Endothelial cell of umbilical vein (primary cell): ENCODE measurements at regions of chr14 and their contacts with region 1.

Region 1: GRCh38 chr14:20855652-20856291 is 35.4 kb upstream of the RNASE3 start:
- DNase-seq: peak; percentile 82
- H3K4me3 ChIP-seq: no peak overlapping the region
- H3K27ac ChIP-seq: no peak overlapping the region
- H3K4me1 ChIP-seq: no peaks in the 10 kb centered on the region
- H3K27me3 ChIP-seq: peaks cover 14 to 20% of the 10 kb centered on the region in 2 experiments
- CTCF ChIP-seq: peak; percentile 64 to 72
- POLR2A ChIP-seq: no peak

Region 2: GRCh38 chr14:20516906-20517305 is 338.9 kb before region 1 on chr14:
- CTCF ChIA-PET with region 1: no interaction called
- POLR2A ChIA-PET with region 1: no interaction called
- dilution Hi-C with region 1: no loop called
- intact Hi-C with region 1: no loop called
- DNase-seq: peak; percentile 82
- H3K4me3 ChIP-seq: peak overlapping the region in 1 of 3 experiments; percentile 2
- H3K27ac ChIP-seq: peak overlapping the region; percentile 81
- H3K4me1 ChIP-seq: peaks cover 31% of the 10 kb centered on the region
- H3K27me3 ChIP-seq: no peaks in the 10 kb centered on the region
- CTCF ChIP-seq: no peak
- POLR2A ChIP-seq: no peak

Region 3: DNA sequence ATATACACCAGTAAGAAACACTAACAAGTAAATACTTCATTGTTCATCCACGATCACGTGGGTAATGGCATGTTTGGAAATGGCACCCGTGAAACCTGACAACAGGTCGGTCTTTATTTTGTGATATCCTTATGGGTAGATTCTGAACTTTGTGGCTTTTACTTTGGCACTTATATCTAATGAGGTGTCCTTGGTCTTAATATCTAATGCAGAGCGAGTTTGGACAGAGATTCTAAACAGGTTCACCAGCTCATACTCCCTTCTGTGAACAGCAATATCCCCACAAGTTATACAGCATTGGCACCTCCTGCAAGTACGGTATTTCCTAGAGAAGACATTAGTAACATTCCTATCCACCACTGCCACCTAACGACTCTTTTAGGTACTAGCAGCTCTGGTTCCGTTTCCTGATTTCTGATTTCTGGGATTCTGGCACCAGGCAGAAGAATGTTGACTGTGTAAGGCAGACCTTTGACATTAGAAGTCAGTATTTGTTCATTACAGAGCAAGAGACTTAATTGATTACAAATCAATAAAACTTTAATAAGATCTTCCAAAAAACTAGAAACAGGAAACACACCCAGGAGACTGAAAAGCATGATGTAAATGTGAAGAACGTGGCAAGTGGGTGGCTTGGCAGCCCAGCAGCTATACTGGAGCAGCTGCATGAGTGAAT is 164.8 kb before region 1 on chr14:
- CTCF ChIA-PET with region 1: interaction called, 96 read pairs
- POLR2A ChIA-PET with region 1: no interaction called
- dilution Hi-C with region 1: no loop called
- intact Hi-C with region 1: no loop called
- DNase-seq: peak; percentile 77
- H3K4me3 ChIP-seq: no peak overlapping the region
- H3K27ac ChIP-seq: no peak overlapping the region
- H3K4me1 ChIP-seq: peaks cover 7% of the 10 kb centered on the region
- H3K27me3 ChIP-seq: no peaks in the 10 kb centered on the region
- CTCF ChIP-seq: peak; percentile 72 to 79
- POLR2A ChIP-seq: no peak

Region 4: DNA sequence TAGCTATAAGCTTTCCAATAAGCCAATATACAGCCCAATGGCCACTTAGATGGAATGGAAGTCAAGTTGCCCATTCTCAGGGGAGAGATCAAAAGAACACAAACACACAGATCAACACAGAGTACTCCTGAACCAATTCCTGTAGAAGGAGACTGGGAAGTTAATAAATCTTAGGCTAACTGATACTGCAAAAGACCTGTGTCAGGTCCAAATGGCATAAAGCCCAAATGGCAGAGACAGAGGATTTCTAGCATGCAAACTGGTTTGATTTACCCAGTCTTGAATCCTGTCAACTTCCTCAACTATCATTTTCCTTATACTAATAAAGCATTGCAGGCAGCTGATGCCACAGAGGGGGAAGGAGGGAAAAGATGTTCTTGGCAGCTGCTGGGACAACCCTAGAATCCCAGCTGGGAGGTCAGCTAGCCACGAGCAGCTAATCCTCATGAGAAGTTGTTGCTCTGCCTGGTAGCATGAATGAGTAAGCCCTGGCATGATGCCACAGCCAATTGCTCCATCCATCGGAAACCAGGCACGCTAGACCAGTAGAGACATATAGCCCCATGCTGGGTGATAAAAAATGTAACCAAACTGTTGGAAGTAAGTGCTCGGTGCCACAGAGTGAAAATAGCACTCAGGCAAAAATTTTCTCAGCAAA is 141.1 kb before region 1 on chr14:
- CTCF ChIA-PET with region 1: interaction called, 15 read pairs
- POLR2A ChIA-PET with region 1: no interaction called
- dilution Hi-C with region 1: no loop called
- intact Hi-C with region 1: no loop called
- DNase-seq: peak; percentile 67
- H3K4me3 ChIP-seq: no peak overlapping the region
- H3K27ac ChIP-seq: no peak overlapping the region
- H3K4me1 ChIP-seq: no peaks in the 10 kb centered on the region
- H3K27me3 ChIP-seq: peaks cover 4 to 7% of the 10 kb centered on the region in 2 experiments
- CTCF ChIP-seq: no peak
- POLR2A ChIP-seq: no peak

Region 5: DNA sequence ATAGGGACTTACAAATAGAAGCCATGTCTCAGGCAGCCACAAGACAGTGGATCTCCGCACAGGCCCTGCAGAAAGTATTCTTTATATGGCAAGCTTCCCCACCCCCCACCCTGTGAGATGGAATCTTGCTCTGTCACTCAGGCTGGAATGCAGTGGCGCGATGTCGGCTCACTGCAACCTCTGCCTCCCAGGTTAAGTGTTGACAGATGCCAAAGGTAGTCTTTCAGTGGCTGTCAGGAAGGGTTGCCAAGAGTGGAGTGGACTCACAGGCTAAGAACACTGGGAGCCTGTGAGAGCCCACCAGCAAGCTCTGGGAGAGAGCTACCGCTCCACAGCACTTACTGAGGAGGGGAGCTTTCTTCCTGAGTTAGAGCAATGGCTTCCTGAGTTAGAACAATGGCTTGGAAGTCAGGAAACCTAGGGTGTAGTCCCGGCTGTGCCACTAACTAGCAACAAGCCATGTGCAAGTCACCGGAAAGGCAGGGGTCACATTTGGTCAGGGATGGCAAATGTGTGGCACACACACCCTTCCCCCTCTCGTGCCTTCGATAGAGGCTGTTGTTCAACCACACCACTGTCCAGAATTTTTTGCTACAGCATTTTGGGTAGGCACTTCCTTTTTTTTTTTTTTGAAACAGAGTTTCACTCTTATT is 55.8 kb before region 1 on chr14:
- CTCF ChIA-PET with region 1: interaction called, 28 read pairs
- POLR2A ChIA-PET with region 1: no interaction called
- dilution Hi-C with region 1: no loop called
- intact Hi-C with region 1: loop called (anchors 1 kb)
- DNase-seq: peak; percentile 90
- H3K4me3 ChIP-seq: peak overlapping the region in 2 of 3 experiments; percentile 32
- H3K27ac ChIP-seq: peak overlapping the region; percentile 82
- H3K4me1 ChIP-seq: peaks cover 46% of the 10 kb centered on the region
- H3K27me3 ChIP-seq: no peaks in the 10 kb centered on the region
- CTCF ChIP-seq: no peak
- POLR2A ChIP-seq: no peak

Region 6: GRCh38 chr14:20934148-20934762 is 78.5 kb after region 1 on chr14:
- CTCF ChIA-PET with region 1: interaction called, 4 read pairs
- POLR2A ChIA-PET with region 1: no interaction called
- dilution Hi-C with region 1: no loop called
- intact Hi-C with region 1: loop called (anchors 10 kb)
- DNase-seq: peak; percentile 5
- H3K4me3 ChIP-seq: no peak overlapping the region
- H3K27ac ChIP-seq: no peak overlapping the region
- H3K4me1 ChIP-seq: no peaks in the 10 kb centered on the region
- H3K27me3 ChIP-seq: peaks cover 3 to 5% of the 10 kb centered on the region in 2 experiments
- CTCF ChIP-seq: peak; percentile 65 to 75
- POLR2A ChIP-seq: no peak

Region 7: GRCh38 chr14:21039585-21040369 is 184.0 kb after region 1 on chr14:
- CTCF ChIA-PET with region 1: interaction called, 23 read pairs
- POLR2A ChIA-PET with region 1: no interaction called
- dilution Hi-C with region 1: no loop called
- intact Hi-C with region 1: loop called (anchors 2 kb)
- DNase-seq: peak; percentile 46
- H3K4me3 ChIP-seq: no peak overlapping the region
- H3K27ac ChIP-seq: no peak overlapping the region
- H3K4me1 ChIP-seq: peaks cover 4% of the 10 kb centered on the region
- H3K27me3 ChIP-seq: peaks cover 10 to 15% of the 10 kb centered on the region in 2 experiments
- CTCF ChIP-seq: peak; percentile 41 to 59
- POLR2A ChIP-seq: no peak